Aorta (tissue), 5 donors: ENCODE measurements at regions of chr9 and their contacts with region 1.

Region 1: GRCh38 chr9:88502552-88503034 is 32.4 kb upstream of the NXNL2 start:
- DNase-seq: peak in 1 of 2 donors; percentile 65
- ATAC-seq: no peak
- H3K4me3 ChIP-seq: no peak overlapping the region
- H3K27ac ChIP-seq: no peak overlapping the region
- H3K4me1 ChIP-seq: no peaks in the 10 kb centered on the region
- H3K27me3 ChIP-seq: no peaks in the 10 kb centered on the region

Region 2: DNA sequence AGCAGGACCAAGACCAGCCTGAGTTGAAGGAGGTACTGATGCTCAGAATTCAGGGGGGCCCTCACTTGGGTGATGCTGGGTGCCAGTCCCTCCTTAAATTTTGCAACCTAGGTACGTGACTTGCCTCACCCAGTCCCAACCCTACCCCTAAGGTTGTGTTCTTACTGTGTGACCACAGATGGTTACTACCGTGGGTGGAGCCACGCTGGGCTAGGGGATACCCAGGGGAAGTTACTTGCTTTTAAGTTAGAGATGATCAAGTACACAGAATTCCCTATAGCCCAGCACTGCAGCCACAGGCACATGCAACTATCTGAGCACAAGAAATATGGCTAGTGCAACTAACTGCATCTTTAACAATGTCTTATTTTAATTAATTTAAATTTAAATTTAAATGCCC is 65.3 kb after region 1 on chr9:
- intact Hi-C with region 1: loop called in 1 of 2 experiments (anchors 10 kb)
- DNase-seq: no peak
- ATAC-seq: no peak
- H3K4me3 ChIP-seq: no peak overlapping the region
- H3K27ac ChIP-seq: no peak overlapping the region
- H3K4me1 ChIP-seq: peaks cover 0 to 1% of the 10 kb centered on the region in 2 donors
- H3K27me3 ChIP-seq: no peaks in the 10 kb centered on the region